Transverse colon (tissue), 4 donors: ENCODE measurements at regions of chr1 and their contacts with region 1.

Region 1: GRCh38 chr1:151728151-151729054 is 7.1 kb downstream of the RIIAD1 start:
- DNase-seq: no peak
- H3K4me3 ChIP-seq: no peak overlapping the region
- H3K27ac ChIP-seq: peak overlapping the region; percentile 20 to 76 (median 64)
- H3K4me1 ChIP-seq: peaks cover 0 to 49% (median 30%) of the 10 kb centered on the region in 4 donors
- H3K27me3 ChIP-seq: no peaks in the 10 kb centered on the region
- CTCF ChIP-seq: no peak
- EP300 ChIP-seq: no peak
- POLR2A ChIP-seq: no peak

Region 2: DNA sequence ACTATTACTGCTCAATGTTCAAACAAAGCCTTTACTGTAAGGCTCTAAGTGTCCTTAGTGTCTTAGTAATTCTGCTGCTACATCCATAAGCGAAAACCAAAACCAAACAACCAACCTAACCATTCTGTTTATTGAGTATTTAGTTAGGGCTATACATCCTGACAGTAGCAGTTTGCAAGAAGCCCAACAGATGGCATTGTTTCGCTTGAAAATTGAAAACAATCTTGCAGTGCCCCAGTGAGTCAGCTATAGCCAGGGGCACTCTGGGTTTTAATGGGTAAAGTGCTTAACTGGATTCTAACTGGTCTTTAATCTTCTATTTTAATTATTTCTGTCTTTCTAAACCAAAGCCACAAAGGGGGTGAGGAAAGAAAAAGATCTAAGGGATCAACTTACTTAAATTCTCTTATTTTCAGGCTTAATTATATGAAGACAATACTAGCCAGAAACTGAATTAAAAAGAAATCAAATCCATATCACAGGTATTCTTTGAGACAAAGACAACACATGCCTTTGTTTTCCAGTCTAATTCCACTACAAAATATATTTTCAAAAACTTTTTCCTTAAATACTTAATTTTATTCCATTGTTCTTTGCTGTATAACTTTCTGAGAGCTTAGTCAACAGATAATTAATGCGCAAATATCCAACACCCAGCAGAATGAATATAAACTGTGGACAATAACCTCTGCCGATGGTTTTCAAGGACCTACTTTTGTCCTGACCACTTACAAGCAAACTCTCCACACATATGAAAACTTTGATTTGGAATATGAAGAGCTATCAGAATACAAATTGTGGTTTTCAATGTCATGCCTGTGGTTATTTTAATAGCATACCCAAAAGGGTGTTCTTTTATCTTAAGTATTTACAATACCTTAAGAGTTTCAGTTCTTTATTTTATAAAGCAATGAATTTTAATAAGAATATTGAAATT is 284.3 kb before region 1 on chr1:
- in situ Hi-C with region 1: loop called in 1 of 4 experiments (anchors 25 kb)
- intact Hi-C with region 1: no loop called
- DNase-seq: peak; percentile 77
- H3K4me3 ChIP-seq: no peak overlapping the region
- H3K27ac ChIP-seq: peak overlapping the region in 3 of 4 donors; percentile 11 to 48 (median 45)
- H3K4me1 ChIP-seq: peaks cover 5 to 36% (median 14%) of the 10 kb centered on the region in 4 donors
- H3K27me3 ChIP-seq: no peaks in the 10 kb centered on the region
- CTCF ChIP-seq: peak; percentile 68 to 79 (median 74)
- EP300 ChIP-seq: no peak
- POLR2A ChIP-seq: no peak

Region 3: GRCh38 chr1:151693076-151693651 is 35.2 kb before region 1 on chr1:
- in situ Hi-C with region 1: no loop called
- intact Hi-C with region 1: loop called (anchors 5 kb)
- DNase-seq: no peak
- H3K4me3 ChIP-seq: no peak overlapping the region
- H3K27ac ChIP-seq: no peak overlapping the region
- H3K4me1 ChIP-seq: no peaks in the 10 kb centered on the region
- H3K27me3 ChIP-seq: no peaks in the 10 kb centered on the region
- CTCF ChIP-seq: peak; percentile 26 to 59 (median 54)
- EP300 ChIP-seq: no peak
- POLR2A ChIP-seq: no peak